Endothelial cell of umbilical vein (primary cell): ENCODE measurements at regions of chr14 and their contacts with region 1.

Region 1: DNA sequence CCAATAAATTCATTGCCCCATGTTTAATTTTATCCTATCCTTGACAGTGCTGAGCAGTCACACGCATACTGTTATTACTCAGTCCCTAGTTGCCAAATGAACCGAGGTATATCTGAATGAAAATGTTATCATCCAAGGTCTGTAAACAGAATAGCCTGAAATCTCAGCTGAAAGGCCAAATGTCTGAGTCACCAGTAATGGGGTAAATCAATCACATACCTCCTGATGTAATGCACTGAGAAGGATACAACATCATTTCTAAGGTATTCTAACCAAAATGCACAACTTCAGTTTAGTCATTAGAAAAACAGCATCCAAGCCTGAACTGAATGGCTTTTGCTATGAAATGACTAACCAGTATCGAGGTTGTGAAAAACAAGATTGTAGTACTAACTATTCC is 228.6 kb downstream of the DPF3 start:
- DNase-seq: peak; percentile 97
- H3K4me3 ChIP-seq: peak overlapping the region in 1 of 3 experiments; percentile 52
- H3K27ac ChIP-seq: peak overlapping the region; percentile 97
- H3K4me1 ChIP-seq: peaks cover 46% of the 10 kb centered on the region
- H3K27me3 ChIP-seq: no peaks in the 10 kb centered on the region
- CTCF ChIP-seq: no peak
- POLR2A ChIP-seq: peak; percentile 15

Region 2: DNA sequence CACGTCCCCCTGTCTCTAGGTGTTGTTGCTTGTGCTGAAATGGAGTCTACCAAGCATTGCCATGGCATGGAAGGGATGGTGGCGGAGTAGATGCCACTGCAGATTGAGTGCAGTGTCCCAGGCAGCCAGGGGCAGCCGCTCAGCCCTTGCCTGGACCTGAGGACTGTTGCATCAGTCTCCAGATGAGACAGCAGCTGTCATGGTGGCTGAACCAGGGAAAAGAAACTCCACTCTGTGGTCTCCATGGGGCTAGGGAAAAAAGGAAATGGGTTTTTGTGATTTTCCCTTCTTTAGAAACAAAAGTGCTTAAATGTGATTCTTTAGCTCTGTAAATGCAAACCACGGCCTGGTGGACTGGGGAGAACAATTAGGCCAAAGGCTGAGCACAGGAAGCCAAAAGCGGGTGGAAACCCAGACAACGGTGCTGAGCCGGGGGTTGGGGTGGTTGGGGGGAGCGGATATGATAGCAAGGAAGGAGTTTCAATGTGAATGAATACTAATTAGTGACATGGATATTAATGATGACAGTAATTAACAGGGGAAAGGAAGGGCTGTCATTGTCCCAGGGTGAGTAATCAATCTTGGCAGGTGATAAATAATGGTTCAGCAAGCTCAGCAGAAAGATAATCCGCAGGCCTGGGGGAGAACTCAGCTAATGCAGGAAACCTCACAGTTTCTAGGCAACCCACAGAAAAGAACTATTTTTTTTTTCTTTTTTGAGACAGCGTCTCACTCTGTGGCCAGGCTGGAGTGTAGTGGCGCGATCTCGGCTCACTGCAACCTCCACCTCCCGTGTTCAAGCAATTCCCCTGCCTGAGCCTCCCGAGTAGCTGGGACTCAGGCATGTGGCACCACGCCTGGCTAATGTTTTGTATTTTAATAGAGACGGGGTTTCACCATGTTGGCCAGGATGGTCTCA is 213.9 kb before region 1 on chr14:
- CTCF ChIA-PET with region 1: no interaction called
- POLR2A ChIA-PET with region 1: no interaction called
- dilution Hi-C with region 1: no loop called
- intact Hi-C with region 1: no loop called
- DNase-seq: no peak
- H3K4me3 ChIP-seq: no peak overlapping the region
- H3K27ac ChIP-seq: no peak overlapping the region
- H3K4me1 ChIP-seq: no peaks in the 10 kb centered on the region
- H3K27me3 ChIP-seq: no peaks in the 10 kb centered on the region
- CTCF ChIP-seq: no peak
- POLR2A ChIP-seq: no peak

Region 3: DNA sequence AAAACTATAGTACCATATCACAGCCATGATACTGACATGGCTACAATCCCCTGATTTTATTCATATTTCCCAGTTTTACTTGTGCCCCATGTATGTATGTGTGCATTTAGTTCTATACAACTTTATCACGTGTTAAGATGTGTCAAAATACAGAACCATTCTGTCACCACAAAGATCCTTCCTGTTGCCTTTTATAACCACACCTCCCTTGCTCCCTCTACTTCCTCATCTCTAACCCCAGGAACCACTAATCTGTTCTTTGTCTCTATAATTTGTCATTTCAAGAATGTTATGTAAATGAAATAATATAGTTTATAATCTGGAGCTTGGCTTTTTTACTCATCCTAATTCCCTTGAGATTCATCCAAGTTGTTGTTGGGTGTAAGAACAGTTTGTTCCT is 129.8 kb before region 1 on chr14:
- CTCF ChIA-PET with region 1: no interaction called
- POLR2A ChIA-PET with region 1: no interaction called
- dilution Hi-C with region 1: no loop called
- intact Hi-C with region 1: no loop called
- DNase-seq: no peak
- H3K4me3 ChIP-seq: no peak overlapping the region
- H3K27ac ChIP-seq: no peak overlapping the region
- H3K4me1 ChIP-seq: no peaks in the 10 kb centered on the region
- H3K27me3 ChIP-seq: peaks cover 4 to 12% of the 10 kb centered on the region in 2 experiments
- CTCF ChIP-seq: no peak
- POLR2A ChIP-seq: no peak

Region 4: DNA sequence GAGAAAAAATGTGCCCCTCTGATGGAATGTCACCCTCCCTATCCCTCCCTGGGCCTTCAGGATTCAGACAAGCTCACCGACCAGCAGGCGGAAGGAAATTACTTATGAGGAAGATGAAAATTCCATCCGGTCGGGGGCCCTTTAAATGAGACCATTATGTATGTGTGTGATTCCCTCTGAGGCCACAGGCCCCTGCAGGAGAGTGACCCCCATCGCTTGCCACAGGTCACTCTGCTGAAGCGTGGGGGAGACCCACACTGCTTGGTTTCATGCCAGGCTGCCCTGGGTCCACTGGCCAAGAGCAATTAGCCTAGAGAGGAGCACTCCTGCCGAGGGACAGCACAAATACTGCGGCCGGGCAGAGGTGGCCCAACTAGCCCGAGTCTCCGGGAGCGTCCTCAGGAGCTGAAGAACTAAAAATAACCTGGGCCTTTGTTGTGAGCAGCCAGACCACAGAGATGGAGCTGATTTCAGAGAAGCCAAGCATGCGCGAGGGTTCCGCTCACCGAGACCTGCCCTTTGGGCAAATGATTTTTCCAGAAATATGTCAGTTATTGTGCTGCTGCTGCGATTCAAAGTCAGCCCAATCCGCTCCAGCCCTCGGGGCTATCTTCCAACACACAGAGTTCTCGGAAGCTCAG is 47.7 kb before region 1 on chr14:
- CTCF ChIA-PET with region 1: interaction called, 4 read pairs
- POLR2A ChIA-PET with region 1: interaction called, 3 read pairs
- dilution Hi-C with region 1: no loop called
- intact Hi-C with region 1: loop called (anchors 1 kb)
- DNase-seq: peak; percentile 48
- H3K4me3 ChIP-seq: no peak overlapping the region
- H3K27ac ChIP-seq: peak overlapping the region; percentile 80
- H3K4me1 ChIP-seq: peaks cover 44% of the 10 kb centered on the region
- H3K27me3 ChIP-seq: no peaks in the 10 kb centered on the region
- CTCF ChIP-seq: no peak
- POLR2A ChIP-seq: no peak

Region 5: GRCh38 chr14:72651081-72651480 is 14.2 kb before region 1 on chr14:
- CTCF ChIA-PET with region 1: interaction called, 3 read pairs
- POLR2A ChIA-PET with region 1: no interaction called
- dilution Hi-C with region 1: no loop called
- intact Hi-C with region 1: loop called (anchors 1 kb)
- DNase-seq: peak; percentile 44
- H3K4me3 ChIP-seq: no peak overlapping the region
- H3K27ac ChIP-seq: peak overlapping the region; percentile 58
- H3K4me1 ChIP-seq: peaks cover 45% of the 10 kb centered on the region
- H3K27me3 ChIP-seq: no peaks in the 10 kb centered on the region
- CTCF ChIP-seq: no peak
- POLR2A ChIP-seq: no peak

Region 6: GRCh38 chr14:72781476-72782181 is 116.4 kb after region 1 on chr14:
- CTCF ChIA-PET with region 1: no interaction called
- POLR2A ChIA-PET with region 1: no interaction called
- dilution Hi-C with region 1: no loop called
- intact Hi-C with region 1: loop called (anchors 5 kb)
- DNase-seq: peak; percentile 59
- H3K4me3 ChIP-seq: no peak overlapping the region
- H3K27ac ChIP-seq: peak overlapping the region; percentile 60
- H3K4me1 ChIP-seq: peaks cover 4% of the 10 kb centered on the region
- H3K27me3 ChIP-seq: no peaks in the 10 kb centered on the region
- CTCF ChIP-seq: no peak
- POLR2A ChIP-seq: no peak

Region 7: GRCh38 chr14:72883961-72884360 is 218.7 kb after region 1 on chr14:
- CTCF ChIA-PET with region 1: interaction called, 5 read pairs
- POLR2A ChIA-PET with region 1: no interaction called
- dilution Hi-C with region 1: no loop called
- intact Hi-C with region 1: loop called (anchors 1 kb)
- DNase-seq: peak; percentile 91
- H3K4me3 ChIP-seq: no peak overlapping the region
- H3K27ac ChIP-seq: peak overlapping the region; percentile 98
- H3K4me1 ChIP-seq: peaks cover 18% of the 10 kb centered on the region
- H3K27me3 ChIP-seq: no peaks in the 10 kb centered on the region
- CTCF ChIP-seq: no peak
- POLR2A ChIP-seq: peak; percentile 67

Region 8: DNA sequence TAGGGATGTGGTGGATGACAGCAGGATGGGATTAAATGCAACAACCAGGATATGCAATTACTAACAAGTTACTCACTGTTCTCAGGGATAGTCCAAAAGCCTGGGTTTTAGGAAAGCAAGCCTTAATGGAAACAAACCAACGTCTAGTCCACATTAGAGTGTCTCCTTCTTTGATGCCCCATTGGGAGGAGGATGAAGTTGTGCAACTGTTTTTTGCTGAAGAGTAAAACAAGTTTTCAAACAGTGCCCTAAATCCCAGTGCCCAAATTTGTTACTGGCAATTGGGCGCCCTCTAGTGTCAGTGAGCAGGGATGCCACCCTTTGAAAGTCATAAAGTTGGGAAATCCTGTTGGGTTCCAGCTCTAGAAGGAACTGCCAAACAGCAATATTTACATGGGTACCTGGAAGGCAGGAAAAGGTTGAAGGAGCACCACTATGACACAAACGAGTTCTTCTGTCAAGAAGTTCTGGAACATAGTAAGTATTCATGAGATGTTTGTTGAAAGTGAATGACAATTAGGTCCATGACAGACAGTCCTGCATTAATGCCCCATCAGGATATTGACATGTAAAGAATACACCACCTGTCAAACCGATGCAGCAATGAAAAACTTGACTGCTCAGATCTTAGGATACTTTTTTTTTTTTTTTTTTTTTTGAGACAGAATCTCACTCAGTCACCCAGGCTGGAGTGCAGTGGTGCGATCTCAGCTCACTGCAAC is 239.7 kb after region 1 on chr14:
- CTCF ChIA-PET with region 1: interaction called, 4 read pairs
- POLR2A ChIA-PET with region 1: no interaction called
- dilution Hi-C with region 1: no loop called
- intact Hi-C with region 1: loop called (anchors 2 kb)
- DNase-seq: peak; percentile 68
- H3K4me3 ChIP-seq: no peak overlapping the region
- H3K27ac ChIP-seq: no peak overlapping the region
- H3K4me1 ChIP-seq: no peaks in the 10 kb centered on the region
- H3K27me3 ChIP-seq: no peaks in the 10 kb centered on the region
- CTCF ChIP-seq: peak; percentile 78 to 93
- POLR2A ChIP-seq: no peak